B cell (primary cell): ENCODE measurements at regions of chr19 and their contacts with region 1.

Region 1: DNA sequence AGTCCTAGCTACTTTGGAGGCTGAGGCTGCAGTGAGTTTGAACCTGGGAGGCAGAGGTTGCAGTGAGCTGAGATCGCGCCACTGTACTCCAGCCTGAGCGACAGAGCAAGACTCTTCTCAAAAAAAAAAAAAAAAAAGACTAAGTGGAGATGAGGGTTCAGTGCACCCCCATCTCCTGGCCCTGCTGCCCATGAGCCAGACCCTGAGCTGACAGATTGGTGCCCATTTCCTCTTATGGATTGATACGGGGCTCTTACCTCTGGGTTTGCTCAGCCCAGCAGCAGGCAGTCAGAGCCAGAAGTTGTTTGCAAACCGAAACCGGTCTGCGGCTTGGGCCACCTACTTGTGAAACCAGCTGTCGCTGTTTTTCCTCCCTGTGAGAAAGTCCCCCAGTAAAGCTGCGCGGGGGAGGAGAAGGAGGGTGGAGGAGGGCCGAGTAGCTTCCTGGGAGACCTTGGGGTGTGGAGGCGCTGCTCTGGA is 36.9 kb downstream of the ARRDC2 start:
- DNase-seq: peak; percentile 93
- ATAC-seq: peak; percentile 91
- H3K4me3 ChIP-seq: peak overlapping the region in 4 of 5 experiments; percentile 20 to 52 (median 36)
- H3K4me3 Mint-ChIP-seq: peak overlapping the region; percentile 85
- H3K27ac ChIP-seq: peak overlapping the region; percentile 80 to 91
- H3K27ac Mint-ChIP-seq: peak overlapping the region; percentile 97
- H3K4me1 ChIP-seq: peaks cover 38 to 55% of the 10 kb centered on the region in 2 donors
- H3K4me1 Mint-ChIP-seq: peaks cover 52% of the 10 kb centered on the region
- H3K27me3 ChIP-seq: no peaks in the 10 kb centered on the region
- H3K27me3 Mint-ChIP-seq: no peaks in the 10 kb centered on the region
- CTCF ChIP-seq: no peak

Region 2: GRCh38 chr19:17755977-17756670 is 288.7 kb before region 1 on chr19:
- CTCF ChIA-PET with region 1: no interaction called
- POLR2A ChIA-PET with region 1: no interaction called
- intact Hi-C with region 1: no loop called
- DNase-seq: peak; percentile 82
- ATAC-seq: peak; percentile 4
- H3K4me3 ChIP-seq: peak overlapping the region in 1 of 5 experiments; percentile 34
- H3K4me3 Mint-ChIP-seq: peak overlapping the region; percentile 84
- H3K27ac ChIP-seq: peak overlapping the region; percentile 56 to 70
- H3K27ac Mint-ChIP-seq: peak overlapping the region; percentile 93
- H3K4me1 ChIP-seq: peaks cover 51 to 65% of the 10 kb centered on the region in 2 donors
- H3K4me1 Mint-ChIP-seq: peaks cover 79% of the 10 kb centered on the region
- H3K27me3 ChIP-seq: no peaks in the 10 kb centered on the region
- H3K27me3 Mint-ChIP-seq: no peaks in the 10 kb centered on the region
- CTCF ChIP-seq: no peak

Region 3: GRCh38 chr19:18013210-18014111 is 31.4 kb before region 1 on chr19:
- CTCF ChIA-PET with region 1: interaction called, 62 read pairs
- POLR2A ChIA-PET with region 1: interaction called, 45 read pairs
- intact Hi-C with region 1: loop called (anchors 1 kb)
- DNase-seq: peak; percentile 32
- ATAC-seq: no peak
- H3K4me3 ChIP-seq: no peak overlapping the region
- H3K4me3 Mint-ChIP-seq: peak overlapping the region; percentile 53
- H3K27ac ChIP-seq: peak overlapping the region in 1 of 2 donors; percentile 56
- H3K27ac Mint-ChIP-seq: peak overlapping the region; percentile 88
- H3K4me1 ChIP-seq: peaks cover 16 to 41% of the 10 kb centered on the region in 2 donors
- H3K4me1 Mint-ChIP-seq: peaks cover 60% of the 10 kb centered on the region
- H3K27me3 ChIP-seq: no peaks in the 10 kb centered on the region
- H3K27me3 Mint-ChIP-seq: no peaks in the 10 kb centered on the region
- CTCF ChIP-seq: no peak

Region 4: GRCh38 chr19:18021121-18021755 is 23.6 kb before region 1 on chr19:
- CTCF ChIA-PET with region 1: interaction called, 42 read pairs
- POLR2A ChIA-PET with region 1: interaction called, 160 read pairs
- intact Hi-C with region 1: loop called (anchors 1 kb)
- DNase-seq: peak; percentile 84
- ATAC-seq: peak; percentile 22
- H3K4me3 ChIP-seq: peak overlapping the region in 2 of 5 experiments; percentile 18 to 35
- H3K4me3 Mint-ChIP-seq: peak overlapping the region; percentile 79
- H3K27ac ChIP-seq: peak overlapping the region; percentile 95 to 99
- H3K27ac Mint-ChIP-seq: peak overlapping the region; percentile 98
- H3K4me1 ChIP-seq: peaks cover 51 to 64% of the 10 kb centered on the region in 2 donors
- H3K4me1 Mint-ChIP-seq: peaks cover 68% of the 10 kb centered on the region
- H3K27me3 ChIP-seq: no peaks in the 10 kb centered on the region
- H3K27me3 Mint-ChIP-seq: no peaks in the 10 kb centered on the region
- CTCF ChIP-seq: no peak

Region 5: GRCh38 chr19:18029617-18030338 is 15.1 kb before region 1 on chr19:
- CTCF ChIA-PET with region 1: interaction called, 42 read pairs
- POLR2A ChIA-PET with region 1: interaction called, 160 read pairs
- intact Hi-C with region 1: loop called (anchors 1 kb)
- DNase-seq: no peak
- ATAC-seq: no peak
- H3K4me3 ChIP-seq: no peak overlapping the region
- H3K4me3 Mint-ChIP-seq: no peak overlapping the region
- H3K27ac ChIP-seq: no peak overlapping the region
- H3K27ac Mint-ChIP-seq: peak overlapping the region; percentile 46
- H3K4me1 ChIP-seq: peaks cover 12 to 18% of the 10 kb centered on the region in 2 donors
- H3K4me1 Mint-ChIP-seq: peaks cover 33% of the 10 kb centered on the region
- H3K27me3 ChIP-seq: no peaks in the 10 kb centered on the region
- H3K27me3 Mint-ChIP-seq: no peaks in the 10 kb centered on the region
- CTCF ChIP-seq: no peak

Region 6: GRCh38 chr19:18058208-18059030 is 13.6 kb after region 1 on chr19:
- CTCF ChIA-PET with region 1: interaction called, 46 read pairs
- POLR2A ChIA-PET with region 1: interaction called, 23 read pairs
- intact Hi-C with region 1: loop called (anchors 1 kb)
- DNase-seq: peak; percentile 90
- ATAC-seq: peak; percentile 96
- H3K4me3 ChIP-seq: peak overlapping the region in 3 of 5 experiments; percentile 21 to 23 (median 23)
- H3K4me3 Mint-ChIP-seq: peak overlapping the region; percentile 65
- H3K27ac ChIP-seq: peak overlapping the region; percentile 67 to 71
- H3K27ac Mint-ChIP-seq: peak overlapping the region; percentile 89
- H3K4me1 ChIP-seq: peaks cover 11 to 13% of the 10 kb centered on the region in 2 donors
- H3K4me1 Mint-ChIP-seq: peaks cover 20% of the 10 kb centered on the region
- H3K27me3 ChIP-seq: no peaks in the 10 kb centered on the region
- H3K27me3 Mint-ChIP-seq: no peaks in the 10 kb centered on the region
- CTCF ChIP-seq: peak; percentile 96

Region 7: GRCh38 chr19:18069383-18069782 is 24.5 kb after region 1 on chr19:
- CTCF ChIA-PET with region 1: no interaction called
- POLR2A ChIA-PET with region 1: no interaction called
- intact Hi-C with region 1: no loop called
- DNase-seq: no peak
- ATAC-seq: no peak
- H3K4me3 ChIP-seq: no peak overlapping the region
- H3K4me3 Mint-ChIP-seq: no peak overlapping the region
- H3K27ac ChIP-seq: no peak overlapping the region
- H3K27ac Mint-ChIP-seq: no peak overlapping the region
- H3K4me1 ChIP-seq: no peaks in the 10 kb centered on the region
- H3K4me1 Mint-ChIP-seq: peaks cover 3% of the 10 kb centered on the region
- H3K27me3 ChIP-seq: no peaks in the 10 kb centered on the region
- H3K27me3 Mint-ChIP-seq: no peaks in the 10 kb centered on the region
- CTCF ChIP-seq: no peak